ENCODE measurements at regions of chr9 and their contacts with region 1.

Region 1: GRCh38 chr9:91285729-91286353 is 75.9 kb downstream of the AUH start:
- DNase-seq: no peak
- H3K4me3 Mint-ChIP-seq: no peak overlapping the region
- H3K27ac Mint-ChIP-seq: peak overlapping the region; percentile 78
- H3K4me1 Mint-ChIP-seq: peaks cover 19% of the 10 kb centered on the region
- H3K27me3 Mint-ChIP-seq: no peaks in the 10 kb centered on the region

Region 2: GRCh38 chr9:90890136-90890535 is 395.7 kb before region 1 on chr9:
- CTCF ChIA-PET with region 1: no interaction called
- POLR2A ChIA-PET with region 1: no interaction called
- intact Hi-C with region 1: no loop called
- DNase-seq: no peak
- H3K4me3 Mint-ChIP-seq: no peak overlapping the region
- H3K27ac Mint-ChIP-seq: no peak overlapping the region
- H3K4me1 Mint-ChIP-seq: no peaks in the 10 kb centered on the region
- H3K27me3 Mint-ChIP-seq: peaks cover 8% of the 10 kb centered on the region

Region 3: GRCh38 chr9:91234510-91234909 is 51.3 kb before region 1 on chr9:
- CTCF ChIA-PET with region 1: no interaction called
- POLR2A ChIA-PET with region 1: no interaction called
- intact Hi-C with region 1: no loop called
- DNase-seq: no peak
- H3K4me3 Mint-ChIP-seq: no peak overlapping the region
- H3K27ac Mint-ChIP-seq: no peak overlapping the region
- H3K4me1 Mint-ChIP-seq: no peaks in the 10 kb centered on the region
- H3K27me3 Mint-ChIP-seq: no peaks in the 10 kb centered on the region

Region 4: GRCh38 chr9:91273853-91274552 is 11.8 kb before region 1 on chr9:
- CTCF ChIA-PET with region 1: no interaction called
- POLR2A ChIA-PET with region 1: no interaction called
- intact Hi-C with region 1: loop called (anchors 1 kb)
- DNase-seq: no peak
- H3K4me3 Mint-ChIP-seq: no peak overlapping the region
- H3K27ac Mint-ChIP-seq: no peak overlapping the region
- H3K4me1 Mint-ChIP-seq: peaks cover 22% of the 10 kb centered on the region
- H3K27me3 Mint-ChIP-seq: no peaks in the 10 kb centered on the region